GM13976 (cell line): ENCODE measurements at regions of chr16 and their contacts with region 1.

Region 1: DNA sequence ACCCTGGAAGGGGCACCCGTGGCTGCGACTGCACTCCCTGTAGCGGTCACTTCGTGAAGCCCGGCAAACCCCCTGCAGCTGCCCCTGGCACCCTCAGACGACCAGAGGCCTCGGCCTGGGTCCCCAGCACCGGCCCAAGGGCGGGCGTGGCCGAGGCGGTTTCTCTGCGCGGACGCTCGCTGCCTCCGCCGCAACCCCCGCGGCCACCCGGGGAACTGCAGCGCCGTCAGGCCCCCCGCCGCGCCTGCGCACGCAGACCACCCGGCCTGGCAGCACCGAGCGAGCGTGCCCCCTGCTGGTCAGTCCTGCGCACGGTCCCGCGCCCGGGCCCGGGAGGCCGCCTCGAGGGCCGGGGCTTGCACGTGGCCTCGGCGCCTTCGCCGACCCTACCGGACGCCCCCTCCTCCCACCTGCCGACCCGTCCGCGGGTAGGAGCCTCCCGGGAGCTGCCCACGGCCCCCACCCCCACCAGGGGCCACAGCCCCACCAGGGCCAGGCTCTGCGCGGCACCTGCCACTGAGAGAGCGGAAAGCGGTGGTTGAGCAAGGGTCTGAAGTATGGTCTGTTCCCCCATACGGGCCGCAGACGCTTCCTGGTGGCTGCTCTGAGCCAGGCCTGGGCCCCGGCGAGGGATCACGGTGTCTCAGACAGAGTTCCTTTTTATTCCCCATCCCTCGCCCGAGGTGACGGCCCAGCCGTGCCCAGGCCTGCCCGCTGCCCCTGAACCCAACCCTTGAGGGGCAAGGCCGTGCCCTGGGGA is 11.5 kb upstream of the HS3ST6 start:
- DNase-seq: peak; percentile 99
- CTCF ChIP-seq: peak; percentile 98

Region 2: DNA sequence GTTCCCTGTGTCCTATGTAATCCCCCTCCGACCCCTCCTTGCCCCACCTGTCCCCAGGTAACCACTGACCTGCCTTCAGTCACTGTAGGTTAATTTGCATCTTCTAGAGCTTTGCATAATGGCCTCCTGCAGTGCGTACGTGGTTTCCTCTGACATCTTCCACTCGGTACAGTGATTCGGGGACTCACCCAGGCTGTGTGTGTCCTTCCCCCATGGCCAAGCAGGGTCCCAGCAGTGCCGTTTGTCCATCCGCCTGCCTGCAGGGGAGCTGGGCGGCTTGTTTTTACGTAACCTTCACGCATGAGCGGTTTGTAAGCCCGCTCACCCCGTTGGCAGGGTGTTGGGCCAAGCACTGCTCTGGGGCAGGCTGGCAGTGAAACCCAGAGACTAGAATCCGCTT is 215.8 kb before region 1 on chr16:
- in situ Hi-C with region 1: no loop called
- DNase-seq: peak; percentile 76
- CTCF ChIP-seq: no peak

Region 3: DNA sequence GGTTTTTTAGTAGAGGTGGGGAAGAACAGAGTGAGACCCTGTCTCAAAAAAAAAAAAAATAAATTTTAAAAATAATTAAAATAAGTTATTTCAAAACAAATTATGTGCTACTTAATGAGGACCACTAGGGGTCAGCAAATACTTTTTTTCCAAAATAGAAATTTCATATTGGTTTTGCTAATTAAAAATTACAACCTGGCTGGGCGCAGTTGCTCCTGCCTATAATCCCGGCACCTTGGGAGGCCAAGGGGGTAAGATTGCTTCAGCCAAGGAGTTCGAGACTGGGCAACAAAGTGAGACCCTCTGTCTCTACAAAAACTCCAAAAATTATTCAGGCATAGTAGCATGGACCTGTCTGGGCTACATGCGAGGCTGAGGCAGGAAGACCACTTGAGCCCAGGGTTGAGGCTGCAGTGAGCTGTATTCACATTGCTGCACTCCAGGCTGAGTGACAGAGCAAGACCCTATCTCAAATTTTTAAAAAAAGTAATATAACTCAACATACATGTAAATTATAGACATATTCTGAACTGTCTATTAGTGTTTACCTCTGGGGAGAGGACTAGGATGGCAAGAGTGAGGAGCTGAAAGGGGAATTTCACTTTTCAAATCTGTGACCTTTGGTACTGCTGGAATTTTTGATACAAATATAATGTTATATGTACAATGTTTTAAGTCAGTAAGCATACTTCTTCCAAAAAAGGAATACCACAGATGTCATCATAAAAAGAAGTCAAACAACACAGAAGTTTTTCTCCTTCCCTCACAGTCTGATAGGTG is 65.9 kb before region 1 on chr16:
- in situ Hi-C with region 1: loop called (anchors 10 kb)
- DNase-seq: no peak
- CTCF ChIP-seq: peak; percentile 15

Region 4: GRCh38 chr16:2033057-2033908 is 103.5 kb after region 1 on chr16:
- in situ Hi-C with region 1: no loop called
- DNase-seq: no peak
- CTCF ChIP-seq: no peak

Region 5: GRCh38 chr16:2288726-2289125 is 359.0 kb after region 1 on chr16:
- in situ Hi-C with region 1: no loop called
- DNase-seq: no peak
- CTCF ChIP-seq: no peak